Activated CD4-positive, alpha-beta memory T cell treated with anti-CD3 and anti-CD28 coated beads, Interleukin-2, amount 10 ng/mL, durations not matched to agents 7 days and 5 days (primary cell): ENCODE measurements at regions of chr1 and their contacts with region 1.

Region 1: DNA sequence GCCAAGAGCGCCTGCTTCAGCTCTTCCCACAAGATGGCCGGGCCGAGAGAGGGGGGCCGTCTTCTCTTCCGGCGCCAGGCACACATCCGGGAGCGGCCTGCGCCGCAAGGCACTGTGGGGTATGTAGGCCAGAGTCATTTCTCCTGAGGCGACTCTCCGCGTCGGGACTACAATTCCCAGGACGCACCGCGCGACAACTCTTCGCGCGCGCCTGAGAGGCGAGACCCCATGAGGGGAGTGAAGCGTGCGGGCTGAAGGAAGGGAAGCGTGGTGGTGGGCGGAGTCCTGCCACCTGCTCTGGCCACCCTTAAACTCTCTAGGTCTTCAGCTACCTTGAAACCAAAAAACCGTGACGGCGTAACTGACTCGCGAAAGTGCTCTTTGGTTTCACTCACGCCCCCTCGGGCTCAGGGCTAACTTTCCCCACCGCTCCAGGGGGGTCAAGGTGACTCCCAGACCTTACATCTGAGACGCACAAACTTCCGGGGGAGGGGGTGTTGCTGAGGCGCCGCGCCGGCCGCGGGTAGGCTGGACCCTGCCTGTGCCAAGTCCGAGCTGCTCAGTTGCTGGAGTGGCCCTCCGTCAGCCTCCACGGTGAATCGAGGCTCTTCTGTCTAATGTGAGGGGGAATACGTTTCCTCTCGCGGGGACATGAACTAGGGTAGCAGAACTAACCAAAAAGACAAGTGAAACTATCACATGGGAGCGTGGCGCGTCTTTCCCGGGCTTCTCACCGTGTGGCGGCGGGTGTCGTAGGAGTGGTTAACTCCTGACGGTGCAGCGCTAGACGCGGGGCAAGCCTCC is at the start of gene SERBP1:
- DNase-seq: peak; percentile 97
- H3K4me3 Mint-ChIP-seq: peak within 1 kb of the TSS; percentile 81
- H3K27ac Mint-ChIP-seq: peak within 1 kb of the TSS; percentile 87
- H3K4me1 Mint-ChIP-seq: peaks cover 40% of the 10 kb centered on the region
- H3K27me3 Mint-ChIP-seq: no peaks in the 10 kb centered on the region
- total RNA-seq, gene SERBP1: 213 to 219 TPM

Region 2: DNA sequence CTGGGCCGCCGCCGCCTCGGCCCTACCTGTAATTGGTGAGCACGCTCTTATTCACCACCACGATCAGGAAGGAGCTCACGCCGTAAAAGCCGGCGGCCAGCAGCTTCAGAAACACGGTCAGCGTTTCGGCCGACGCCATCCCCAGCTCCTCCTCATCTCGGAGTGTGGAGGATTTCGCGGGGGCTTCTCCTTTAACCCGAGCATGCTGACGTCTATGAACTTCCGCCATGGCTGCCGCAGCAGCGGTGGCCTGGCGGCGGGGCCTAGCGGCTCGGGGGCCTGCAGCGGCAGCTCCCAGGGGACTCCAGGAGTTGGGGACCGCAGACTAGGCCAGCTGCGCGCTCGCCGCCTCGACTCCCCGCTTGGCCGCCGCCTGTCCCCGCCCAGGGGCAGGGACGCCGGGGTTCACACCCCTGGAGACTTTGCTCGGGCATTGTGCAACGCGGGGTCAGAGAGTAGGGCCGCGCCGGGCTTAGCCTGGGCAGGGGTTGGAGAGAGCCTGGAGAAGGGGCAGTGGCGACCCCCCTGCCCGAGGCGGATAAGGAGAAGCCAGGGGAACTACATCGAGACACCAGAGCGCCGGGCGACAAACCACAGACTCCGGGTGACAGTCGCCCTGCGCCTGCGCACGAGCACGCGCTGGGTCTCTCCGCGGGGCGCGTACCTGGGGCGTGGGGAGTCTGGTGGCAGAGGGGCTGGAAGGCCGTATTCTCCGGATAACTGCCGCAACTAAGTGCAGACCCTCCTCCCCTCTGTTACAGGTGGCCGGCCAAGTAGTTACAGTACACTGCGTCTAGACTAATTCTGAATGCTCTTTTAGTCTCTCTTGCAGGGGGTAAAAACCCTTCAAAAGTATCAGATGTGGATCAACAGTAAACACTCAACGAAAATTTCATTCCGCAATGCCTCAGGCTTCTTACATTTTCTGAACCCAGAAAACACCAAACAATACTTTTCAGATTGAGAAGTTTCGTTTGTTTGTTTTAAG is 376.5 kb before region 1 on chr1 and contains the start of gene SLC35D1:
- CTCF ChIA-PET with region 1: no interaction called
- POLR2A ChIA-PET with region 1: interaction called, 15 read pairs
- DNase-seq: peak; percentile 81
- H3K4me3 Mint-ChIP-seq: peak within 1 kb of the TSS; percentile 81
- H3K27ac Mint-ChIP-seq: peak within 1 kb of the TSS; percentile 84
- H3K4me1 Mint-ChIP-seq: peaks cover 31% of the 10 kb centered on the region
- H3K27me3 Mint-ChIP-seq: peaks cover 2% of the 10 kb centered on the region
- total RNA-seq, gene SLC35D1: 14.2 to 15.7 TPM

Region 3: DNA sequence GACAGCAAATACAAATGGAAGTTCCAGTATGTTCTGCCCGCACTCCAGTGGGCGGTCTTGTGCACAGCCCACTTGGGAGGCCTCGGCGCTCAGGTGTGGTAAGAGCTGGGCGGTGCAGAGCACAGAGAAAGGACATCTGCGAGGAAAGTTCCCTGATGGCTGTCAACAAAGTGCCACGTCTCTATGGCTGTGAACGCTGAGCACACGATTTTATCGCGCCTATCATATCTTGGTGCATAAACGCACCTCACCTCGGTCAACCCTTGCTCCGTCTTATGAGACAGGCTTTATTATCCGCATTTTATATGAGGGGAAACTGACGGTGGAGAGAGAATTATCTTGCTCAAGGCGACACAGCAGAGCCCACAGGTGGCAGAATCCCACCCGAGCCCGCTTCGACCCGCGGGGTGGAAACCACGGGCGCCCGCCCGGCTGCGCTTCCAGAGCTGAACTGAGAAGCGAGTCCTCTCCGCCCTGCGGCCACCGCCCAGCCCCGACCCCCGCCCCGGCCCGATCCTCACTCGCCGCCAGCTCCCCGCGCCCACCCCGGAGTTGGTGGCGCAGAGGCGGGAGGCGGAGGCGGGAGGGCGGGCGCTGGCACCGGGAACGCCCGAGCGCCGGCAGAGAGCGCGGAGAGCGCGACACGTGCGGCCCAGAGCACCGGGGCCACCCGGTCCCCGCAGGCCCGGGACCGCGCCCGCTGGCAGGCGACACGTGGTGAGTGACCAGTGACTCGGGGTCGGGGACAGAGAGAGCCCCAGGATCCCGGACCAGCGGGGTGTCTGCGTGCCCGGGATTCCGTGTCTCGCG is 123.1 kb before region 1 on chr1 and contains the start of gene IL12RB2:
- CTCF ChIA-PET with region 1: interaction called, 3 read pairs
- POLR2A ChIA-PET with region 1: interaction called, 19 read pairs
- DNase-seq: peak; percentile 73
- H3K4me3 Mint-ChIP-seq: peak within 1 kb of the TSS; percentile 97
- H3K27ac Mint-ChIP-seq: peak within 1 kb of the TSS; percentile 94
- H3K4me1 Mint-ChIP-seq: peaks cover 72% of the 10 kb centered on the region
- H3K27me3 Mint-ChIP-seq: no peaks in the 10 kb centered on the region
- total RNA-seq, gene IL12RB2: 75.5 to 76.0 TPM

Region 4: GRCh38 chr1:67332653-67333529 is 97.7 kb before region 1 on chr1:
- CTCF ChIA-PET with region 1: interaction called, 9 read pairs
- POLR2A ChIA-PET with region 1: interaction called, 80 read pairs
- DNase-seq: peak; percentile 48
- H3K4me3 Mint-ChIP-seq: peak overlapping the region; percentile 25
- H3K27ac Mint-ChIP-seq: peak overlapping the region; percentile 89
- H3K4me1 Mint-ChIP-seq: peaks cover 82% of the 10 kb centered on the region
- H3K27me3 Mint-ChIP-seq: no peaks in the 10 kb centered on the region

Region 5: GRCh38 chr1:67407498-67407897 is 23.1 kb before region 1 on chr1:
- CTCF ChIA-PET with region 1: interaction called, 3 read pairs
- POLR2A ChIA-PET with region 1: interaction called, 18 read pairs
- DNase-seq: no peak
- H3K4me3 Mint-ChIP-seq: no peak overlapping the region
- H3K27ac Mint-ChIP-seq: no peak overlapping the region
- H3K4me1 Mint-ChIP-seq: peaks cover 3% of the 10 kb centered on the region
- H3K27me3 Mint-ChIP-seq: no peaks in the 10 kb centered on the region

Region 6: GRCh38 chr1:67500413-67500959 is 69.9 kb after region 1 on chr1:
- CTCF ChIA-PET with region 1: interaction called, 12 read pairs
- POLR2A ChIA-PET with region 1: interaction called, 3 read pairs
- DNase-seq: peak; percentile 90
- H3K4me3 Mint-ChIP-seq: no peak overlapping the region
- H3K27ac Mint-ChIP-seq: no peak overlapping the region
- H3K4me1 Mint-ChIP-seq: peaks cover 4% of the 10 kb centered on the region
- H3K27me3 Mint-ChIP-seq: peaks cover 6% of the 10 kb centered on the region